Activated CD4-positive, alpha-beta T cell treated with anti-CD3 and anti-CD28 coated beads, Interleukin-2, amount 10 ng/mL, durations not matched to agents 24 days and 14 days (primary cell): ENCODE measurements at regions of chr3 and their contacts with region 1.

Region 1: DNA sequence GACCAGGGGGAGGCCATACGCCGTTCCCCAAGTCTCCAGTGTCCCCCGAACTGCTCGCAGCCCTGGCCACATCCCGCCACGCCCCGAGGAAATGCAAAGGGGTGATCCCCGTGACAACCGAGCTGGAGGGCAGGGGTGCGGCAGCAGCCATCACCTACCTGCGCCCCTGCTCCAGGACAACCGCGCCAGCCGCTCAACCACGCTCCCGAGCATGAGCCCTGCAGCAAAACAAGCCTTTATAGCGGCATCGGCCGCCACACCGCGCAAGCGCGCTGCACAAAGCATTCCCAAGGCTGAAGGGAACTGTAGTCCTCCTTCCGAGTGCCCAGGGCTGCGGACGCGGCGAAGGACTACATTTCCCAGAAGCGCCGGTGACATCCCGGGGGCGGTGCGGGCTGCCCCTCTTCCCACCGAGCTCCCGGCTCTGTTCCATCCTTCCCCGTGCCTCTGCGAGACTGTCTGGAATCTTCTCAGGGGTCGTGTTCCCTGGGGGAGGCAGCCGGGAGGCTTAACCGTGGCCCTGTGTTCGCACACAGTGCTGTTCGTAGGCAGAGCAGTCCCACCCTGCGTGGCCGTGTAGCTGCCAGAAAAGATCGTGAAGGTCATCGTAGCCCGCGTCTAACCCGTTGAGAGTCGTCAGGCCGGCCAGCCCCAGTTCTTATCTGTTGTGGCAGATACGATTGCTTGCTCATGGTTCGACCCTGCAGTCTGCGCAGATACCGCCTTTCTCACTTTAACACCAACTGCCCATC is at the start of gene ABCC5:
- DNase-seq: peak; percentile 95
- H3K4me3 Mint-ChIP-seq: peak within 1 kb of the TSS; percentile 99
- H3K27ac Mint-ChIP-seq: peak within 1 kb of the TSS; percentile 90
- H3K4me1 Mint-ChIP-seq: peaks cover 28% of the 10 kb centered on the region
- H3K27me3 Mint-ChIP-seq: peaks cover 9% of the 10 kb centered on the region
- total RNA-seq, gene ABCC5: 19.7 and 22.1 TPM in 2 replicates

Region 2: DNA sequence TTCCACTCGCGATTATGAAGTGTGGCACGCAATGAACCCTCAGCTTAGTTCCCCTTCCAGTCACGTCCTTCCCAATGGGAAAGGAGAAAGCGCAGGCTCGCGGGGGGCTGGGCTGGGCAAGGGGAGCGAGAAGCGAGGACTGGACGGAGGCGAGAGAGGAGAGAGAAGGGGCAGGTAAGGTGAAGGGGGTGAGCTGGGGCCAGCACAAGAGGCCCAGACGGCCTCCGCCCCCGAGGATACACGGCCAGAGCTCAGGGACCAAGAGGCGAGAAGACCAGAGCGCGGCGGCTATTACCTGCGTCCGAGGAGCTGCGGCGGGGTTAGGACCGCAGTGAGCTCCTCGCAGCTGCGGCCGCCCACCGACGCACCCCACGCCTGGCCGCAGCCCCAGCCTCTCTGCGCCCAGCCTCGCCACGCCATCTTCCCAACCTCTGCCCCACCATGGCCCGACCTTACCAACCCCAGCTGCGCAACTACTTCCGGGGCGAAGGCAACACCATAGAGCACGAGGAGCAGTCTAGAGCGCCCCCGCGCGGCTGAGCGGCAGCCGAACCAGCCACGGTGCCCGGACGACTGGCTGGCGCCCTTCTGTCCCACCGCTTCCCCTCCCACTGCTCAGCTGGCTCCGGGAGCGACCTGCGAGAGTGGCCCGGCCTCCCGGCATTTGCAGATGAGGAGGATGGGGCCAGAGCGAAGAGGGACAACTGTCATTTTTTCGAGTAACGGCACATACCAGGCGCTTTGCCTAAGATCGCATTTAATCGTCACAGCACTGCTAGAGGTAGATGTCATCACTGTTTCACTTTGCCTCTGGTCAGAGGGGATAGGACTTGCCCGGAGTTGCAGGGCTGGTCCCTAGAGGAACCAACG is 133.2 kb before region 1 on chr3 and contains the start of gene PARL:
- intact Hi-C with region 1: loop called (anchors 1 kb)
- DNase-seq: peak; percentile 99
- H3K4me3 Mint-ChIP-seq: peak within 1 kb of the TSS; percentile 94
- H3K27ac Mint-ChIP-seq: peak within 1 kb of the TSS; percentile 93
- H3K4me1 Mint-ChIP-seq: peaks cover 23% of the 10 kb centered on the region
- H3K27me3 Mint-ChIP-seq: peaks cover 2% of the 10 kb centered on the region
- total RNA-seq, gene PARL: 89.5 and 91.4 TPM in 2 replicates

Region 3: DNA sequence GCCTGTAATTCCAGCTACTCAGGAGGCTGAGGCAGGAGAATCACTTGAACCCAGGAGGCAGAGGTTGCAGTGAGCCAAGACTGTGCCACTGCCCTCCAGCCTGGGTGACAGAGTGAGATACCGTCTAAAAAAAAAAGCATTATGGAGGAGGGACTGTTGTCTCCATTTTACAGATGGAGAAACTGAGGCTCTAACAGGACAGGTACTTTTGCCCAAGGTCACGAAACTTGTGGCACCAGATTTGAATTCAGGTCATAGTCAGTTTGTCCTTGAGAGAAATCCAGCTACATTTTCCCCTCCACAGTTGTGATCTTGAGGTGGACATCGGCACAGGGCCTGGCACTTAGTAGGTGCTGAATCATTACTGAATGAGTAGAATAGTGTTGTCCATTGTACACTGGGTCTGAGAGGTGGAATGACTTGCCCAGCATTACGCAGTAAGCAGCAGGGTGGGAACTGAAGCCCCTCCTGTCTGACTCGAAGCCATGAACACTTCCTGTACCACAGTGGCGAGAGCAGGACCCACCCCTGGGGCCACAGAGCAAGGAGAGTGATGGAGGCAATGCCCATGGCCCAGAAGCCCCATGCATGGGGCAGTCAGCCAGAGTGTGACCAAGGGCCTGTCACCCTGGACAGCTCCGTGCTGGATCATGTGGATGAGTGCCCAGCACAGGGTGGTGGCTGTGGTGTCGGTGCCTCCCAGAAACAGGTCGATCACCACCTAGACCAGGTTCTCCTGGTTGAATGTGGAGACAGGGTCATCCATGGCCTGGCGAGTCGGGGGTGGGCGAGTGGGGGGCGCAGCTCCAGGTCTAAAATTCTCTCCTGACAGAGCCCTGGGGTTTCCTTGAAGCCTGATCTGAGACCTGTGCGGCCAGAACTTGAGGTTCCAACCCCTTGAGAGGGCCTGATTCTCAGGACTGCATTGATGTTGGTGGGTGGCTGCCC is 112.7 kb before region 1 on chr3:
- intact Hi-C with region 1: loop called (anchors 2 kb)
- DNase-seq: no peak
- H3K4me3 Mint-ChIP-seq: no peak overlapping the region
- H3K27ac Mint-ChIP-seq: no peak overlapping the region
- H3K4me1 Mint-ChIP-seq: no peaks in the 10 kb centered on the region
- H3K27me3 Mint-ChIP-seq: peaks cover 4% of the 10 kb centered on the region

Region 4: DNA sequence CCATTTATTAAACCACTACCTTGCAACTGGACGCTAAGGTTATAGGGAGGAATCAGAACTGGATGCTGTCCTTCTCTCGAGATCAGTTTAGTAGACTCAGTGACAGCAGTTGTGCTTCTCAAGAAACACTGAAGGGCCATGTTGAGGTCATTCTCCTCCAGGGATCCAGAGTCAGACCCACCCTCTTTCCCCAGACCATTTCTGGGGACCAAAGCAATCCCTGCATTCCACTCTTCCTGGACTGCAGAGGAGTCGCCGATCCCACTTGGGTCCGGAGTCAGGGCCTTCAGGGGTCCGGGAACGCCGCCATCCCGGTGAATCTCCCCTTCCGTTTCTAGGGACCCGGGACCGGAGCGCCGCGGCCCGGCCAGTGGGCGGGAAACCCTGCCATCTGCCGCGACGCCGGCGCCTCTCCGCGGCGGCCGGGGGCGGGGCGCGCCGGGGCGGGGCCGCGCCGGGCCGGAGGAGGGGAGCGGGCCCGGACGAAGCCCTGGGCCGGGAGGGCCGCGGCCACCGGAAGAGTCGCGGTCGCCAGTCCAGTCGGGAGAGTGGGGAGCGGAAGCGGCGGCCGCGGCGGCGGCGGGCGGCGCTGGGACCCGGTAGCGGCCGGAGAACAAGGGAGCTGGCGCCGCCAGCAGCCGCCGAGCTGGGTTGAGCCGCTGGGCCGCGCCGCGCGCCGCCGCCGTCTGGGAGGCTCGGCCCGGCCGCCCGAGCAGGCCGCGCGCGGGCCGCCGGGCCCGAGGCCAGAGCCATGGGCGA is 137.2 kb after region 1 on chr3 and contains the start of gene DVL3:
- intact Hi-C with region 1: loop called (anchors 5 kb)
- DNase-seq: peak; percentile 88
- H3K4me3 Mint-ChIP-seq: peak within 1 kb of the TSS; percentile 95
- H3K27ac Mint-ChIP-seq: peak within 1 kb of the TSS; percentile 78
- H3K4me1 Mint-ChIP-seq: peaks cover 14% of the 10 kb centered on the region
- H3K27me3 Mint-ChIP-seq: no peaks in the 10 kb centered on the region
- total RNA-seq, gene DVL3: 49.0 and 54.5 TPM in 2 replicates

Region 5: GRCh38 chr3:184168363-184169120 is 150.7 kb after region 1 on chr3:
- intact Hi-C with region 1: no loop called
- DNase-seq: no peak
- H3K4me3 Mint-ChIP-seq: no peak overlapping the region
- H3K27ac Mint-ChIP-seq: no peak overlapping the region
- H3K4me1 Mint-ChIP-seq: peaks cover 6% of the 10 kb centered on the region
- H3K27me3 Mint-ChIP-seq: no peaks in the 10 kb centered on the region

Region 6: GRCh38 chr3:184250167-184250828 is 232.4 kb after region 1 on chr3:
- intact Hi-C with region 1: loop called (anchors 5 kb)
- DNase-seq: peak; percentile 97
- H3K4me3 Mint-ChIP-seq: peak overlapping the region; percentile 98
- H3K27ac Mint-ChIP-seq: peak overlapping the region; percentile 100
- H3K4me1 Mint-ChIP-seq: peaks cover 16% of the 10 kb centered on the region
- H3K27me3 Mint-ChIP-seq: no peaks in the 10 kb centered on the region

Region 7: DNA sequence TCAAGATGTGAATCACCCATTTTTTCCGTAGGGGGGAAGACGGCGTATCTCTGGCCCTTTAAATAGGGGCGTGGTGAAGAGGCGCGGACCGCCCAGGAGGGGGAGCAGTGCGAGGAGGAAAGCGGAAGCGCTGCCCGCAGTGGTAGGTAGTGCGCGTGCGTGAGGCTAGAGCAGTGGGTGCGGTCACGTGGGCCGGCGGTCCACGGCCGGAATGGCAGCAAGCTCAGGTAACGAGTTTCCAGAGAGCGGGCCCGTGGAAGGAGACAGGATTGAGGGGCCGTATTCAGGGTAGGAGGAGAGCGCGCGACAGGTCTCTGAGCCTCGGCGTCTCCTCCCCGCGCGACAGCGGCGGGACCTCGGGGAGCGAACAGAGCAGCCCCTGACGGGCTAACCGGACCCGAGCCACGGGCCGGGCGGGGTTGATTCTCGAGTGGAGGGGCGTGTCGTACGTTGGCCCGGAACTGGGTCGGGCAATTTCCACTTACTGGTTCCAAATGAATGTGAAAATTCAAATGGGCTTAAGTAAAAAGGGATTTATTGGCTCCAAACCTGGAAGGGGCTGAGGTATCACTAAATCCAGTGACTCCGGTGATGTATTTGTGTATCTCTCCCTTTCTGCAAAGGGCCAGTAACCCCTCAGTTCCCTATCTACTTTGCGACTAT is 794.3 kb after region 1 on chr3 and contains the start of gene VPS8:
- intact Hi-C with region 1: loop called (anchors 5 kb)
- DNase-seq: peak; percentile 99
- H3K4me3 Mint-ChIP-seq: peak within 1 kb of the TSS; percentile 97
- H3K27ac Mint-ChIP-seq: peak within 1 kb of the TSS; percentile 97
- H3K4me1 Mint-ChIP-seq: peaks cover 57% of the 10 kb centered on the region
- H3K27me3 Mint-ChIP-seq: peaks cover 3% of the 10 kb centered on the region
- total RNA-seq, gene VPS8: 33.6 and 33.9 TPM in 2 replicates